Activated CD8-positive, alpha-beta T cell treated with anti-CD3 and anti-CD28 coated beads, Interleukin-2, amount 10 ng/mL, durations not matched to agents 7 days and 5 days (primary cell): ENCODE measurements at regions of chr7 and their contacts with region 1.

Region 1: DNA sequence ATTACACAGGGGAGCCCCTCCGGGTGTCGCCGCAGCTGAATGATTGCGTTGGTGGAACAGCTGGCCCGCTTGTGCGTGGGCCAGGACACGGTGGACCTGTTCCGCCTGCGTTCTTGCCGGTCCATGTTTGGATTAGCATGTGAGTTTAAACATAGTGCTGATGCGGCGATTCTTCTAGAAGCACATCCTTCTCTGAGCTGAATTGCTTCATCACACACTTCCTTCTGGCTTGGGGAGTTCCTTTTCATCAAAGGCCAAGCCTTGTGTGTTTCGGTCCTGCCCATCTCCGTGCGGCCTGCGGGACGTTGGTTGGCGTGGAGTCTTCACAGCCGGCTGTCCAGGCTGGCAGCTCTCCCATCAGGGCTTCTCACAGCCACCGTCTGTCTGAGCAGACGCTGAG is 45.5 kb upstream of the SLC29A4 start:
- DNase-seq: no peak
- ATAC-seq: no peak
- H3K4me3 Mint-ChIP-seq: no peak overlapping the region
- H3K27ac Mint-ChIP-seq: no peak overlapping the region
- H3K4me1 Mint-ChIP-seq: peaks cover 22% of the 10 kb centered on the region
- H3K27me3 Mint-ChIP-seq: peaks cover 23% of the 10 kb centered on the region

Region 2: GRCh38 chr7:5217851-5218331 is 19.4 kb before region 1 on chr7:
- CTCF ChIA-PET with region 1: interaction called, 12 read pairs
- POLR2A ChIA-PET with region 1: no interaction called
- DNase-seq: no peak
- ATAC-seq: no peak
- H3K4me3 Mint-ChIP-seq: no peak overlapping the region
- H3K27ac Mint-ChIP-seq: no peak overlapping the region
- H3K4me1 Mint-ChIP-seq: no peaks in the 10 kb centered on the region
- H3K27me3 Mint-ChIP-seq: no peaks in the 10 kb centered on the region

Region 3: DNA sequence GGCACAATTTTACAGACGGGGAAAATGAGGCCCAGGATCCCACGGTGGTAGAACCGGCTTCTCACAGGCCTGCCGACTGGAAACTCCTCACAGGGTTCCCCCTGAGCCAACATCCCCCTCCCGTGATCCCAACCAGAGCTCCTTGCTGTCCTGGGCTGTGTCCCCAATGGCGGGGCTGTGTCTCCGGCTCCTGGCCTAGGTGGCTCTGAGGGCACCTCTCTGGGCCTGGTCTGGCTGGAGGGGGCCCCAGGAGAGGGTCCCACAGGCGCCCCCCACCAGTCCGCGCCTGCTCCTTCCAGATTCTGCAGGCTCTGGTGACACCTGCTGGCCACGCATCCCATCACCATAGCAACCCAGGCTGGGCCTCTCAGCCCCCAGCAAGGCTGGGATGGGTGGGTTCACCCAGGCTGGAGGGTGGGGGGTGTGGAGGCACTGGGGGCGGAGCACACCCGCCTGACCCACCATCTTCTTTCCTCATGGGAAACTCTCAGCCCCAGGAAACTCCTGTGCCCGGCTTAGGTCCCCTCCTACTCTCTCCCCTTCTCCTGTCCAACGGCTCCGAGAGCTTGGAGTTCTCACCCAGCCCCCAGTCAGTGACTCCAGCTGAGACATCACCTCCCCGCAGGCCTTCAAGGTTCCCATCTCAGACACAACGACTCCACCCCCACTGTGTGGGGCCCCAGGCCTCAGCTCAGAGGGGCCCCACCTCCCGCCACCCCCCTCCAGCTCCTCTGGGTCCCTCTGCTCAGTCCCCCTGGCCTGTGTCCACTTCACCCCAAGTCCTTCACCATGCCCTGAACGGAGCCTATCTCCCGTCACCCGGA is 213.5 kb after region 1 on chr7:
- CTCF ChIA-PET with region 1: interaction called, 18 read pairs
- POLR2A ChIA-PET with region 1: no interaction called
- DNase-seq: peak; percentile 53
- ATAC-seq: peak; percentile 68
- H3K4me3 Mint-ChIP-seq: no peak overlapping the region
- H3K27ac Mint-ChIP-seq: no peak overlapping the region
- H3K4me1 Mint-ChIP-seq: peaks cover 3% of the 10 kb centered on the region
- H3K27me3 Mint-ChIP-seq: peaks cover 4% of the 10 kb centered on the region